PC-9 (cell line): ENCODE measurements at regions of chr4 and their contacts with region 1.

Region 1: GRCh38 chr4:24980064-24980690 is 50.6 kb downstream of the LGI2 start:
- DNase-seq: peak; percentile 39 to 40
- H3K4me3 ChIP-seq: no peak overlapping the region
- H3K27ac ChIP-seq: no peak overlapping the region
- H3K4me1 ChIP-seq: no peaks in the 10 kb centered on the region; the same call in 1 of the 2 replicates
- H3K27me3 ChIP-seq: no peaks in the 10 kb centered on the region
- CTCF ChIP-seq: peak; percentile 83

Region 2: DNA sequence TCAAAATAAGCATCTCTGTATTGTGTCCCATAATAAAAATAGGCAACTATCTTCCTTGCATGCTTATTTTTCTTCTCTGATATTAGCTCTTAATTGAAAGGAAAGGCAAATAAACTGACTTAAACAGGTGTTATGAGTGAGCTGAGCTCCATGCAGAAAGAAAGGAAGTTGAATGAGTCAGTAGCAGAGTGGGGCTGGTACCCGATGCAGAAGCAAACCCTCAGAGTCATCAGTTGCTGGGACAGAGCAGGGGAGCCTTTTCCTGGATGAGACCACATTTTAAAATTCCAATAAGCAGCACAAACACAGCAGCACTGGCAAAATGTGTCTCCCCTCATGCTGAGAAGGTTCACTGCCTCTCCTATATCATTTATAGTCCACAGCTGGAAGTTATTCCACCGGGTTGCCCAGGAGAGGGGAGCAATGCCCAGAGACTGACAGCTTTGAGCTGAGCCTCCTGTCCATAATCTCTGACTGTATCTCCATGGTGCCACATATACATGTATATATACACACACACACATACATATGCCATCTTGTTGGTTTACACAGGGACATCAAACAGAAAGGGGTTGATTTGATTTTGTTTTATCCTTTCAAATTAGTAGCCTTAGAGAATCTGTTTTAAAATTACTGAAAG is 816.0 kb before region 1 on chr4:
- CTCF ChIA-PET with region 1: interaction called, 21 read pairs
- POLR2A ChIA-PET with region 1: no interaction called
- intact Hi-C with region 1: no loop called
- DNase-seq: no peak
- H3K4me3 ChIP-seq: no peak overlapping the region
- H3K27ac ChIP-seq: no peak overlapping the region
- H3K4me1 ChIP-seq: no peaks in the 10 kb centered on the region
- H3K27me3 ChIP-seq: no peaks in the 10 kb centered on the region
- CTCF ChIP-seq: no peak

Region 3: GRCh38 chr4:25367004-25367621 is 386.9 kb after region 1 on chr4:
- CTCF ChIA-PET with region 1: interaction called, 3 read pairs
- POLR2A ChIA-PET with region 1: no interaction called
- intact Hi-C with region 1: loop called (anchors 5 kb)
- DNase-seq: no peak
- H3K4me3 ChIP-seq: no peak overlapping the region
- H3K27ac ChIP-seq: no peak overlapping the region
- H3K4me1 ChIP-seq: no peaks in the 10 kb centered on the region
- H3K27me3 ChIP-seq: no peaks in the 10 kb centered on the region
- CTCF ChIP-seq: peak; percentile 77